ENCODE measurements at regions of chr2 and their contacts with region 1.

Region 1: DNA sequence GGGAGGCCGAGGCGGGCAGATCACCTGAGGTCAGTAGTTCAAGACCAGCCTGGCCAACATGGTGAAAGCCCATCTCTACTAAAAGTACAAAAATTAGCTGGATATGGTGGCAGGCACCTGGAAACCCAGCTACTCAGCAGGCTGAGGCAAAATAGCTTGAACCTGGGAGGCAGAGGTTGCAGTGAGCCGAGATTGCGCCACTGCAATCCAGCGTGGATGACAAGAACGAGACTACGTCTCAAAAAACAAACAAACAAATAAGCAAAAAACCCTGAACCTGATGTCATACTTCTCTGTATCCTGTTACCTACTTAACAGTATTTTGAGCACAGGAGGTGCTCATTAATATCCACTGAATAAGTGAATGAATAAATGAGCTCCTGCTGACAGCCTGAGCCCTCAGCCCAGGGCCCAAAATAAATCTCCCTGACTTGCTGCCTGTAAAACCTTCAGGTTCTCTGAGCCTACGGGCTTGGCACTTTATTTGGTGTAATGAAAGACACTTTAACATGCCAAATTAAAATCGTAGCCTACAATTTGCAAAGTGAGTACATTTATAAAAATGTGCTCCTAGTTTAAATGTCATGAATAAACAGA is 215.1 kb downstream of the ZNF385B start:
- DNase-seq: no peak
- H3K4me3 ChIP-seq: no peak overlapping the region
- H3K27ac ChIP-seq: no peak overlapping the region
- H3K4me1 ChIP-seq: no peaks in the 10 kb centered on the region
- H3K27me3 ChIP-seq: no peaks in the 10 kb centered on the region
- CTCF ChIP-seq: no peak

Region 2: DNA sequence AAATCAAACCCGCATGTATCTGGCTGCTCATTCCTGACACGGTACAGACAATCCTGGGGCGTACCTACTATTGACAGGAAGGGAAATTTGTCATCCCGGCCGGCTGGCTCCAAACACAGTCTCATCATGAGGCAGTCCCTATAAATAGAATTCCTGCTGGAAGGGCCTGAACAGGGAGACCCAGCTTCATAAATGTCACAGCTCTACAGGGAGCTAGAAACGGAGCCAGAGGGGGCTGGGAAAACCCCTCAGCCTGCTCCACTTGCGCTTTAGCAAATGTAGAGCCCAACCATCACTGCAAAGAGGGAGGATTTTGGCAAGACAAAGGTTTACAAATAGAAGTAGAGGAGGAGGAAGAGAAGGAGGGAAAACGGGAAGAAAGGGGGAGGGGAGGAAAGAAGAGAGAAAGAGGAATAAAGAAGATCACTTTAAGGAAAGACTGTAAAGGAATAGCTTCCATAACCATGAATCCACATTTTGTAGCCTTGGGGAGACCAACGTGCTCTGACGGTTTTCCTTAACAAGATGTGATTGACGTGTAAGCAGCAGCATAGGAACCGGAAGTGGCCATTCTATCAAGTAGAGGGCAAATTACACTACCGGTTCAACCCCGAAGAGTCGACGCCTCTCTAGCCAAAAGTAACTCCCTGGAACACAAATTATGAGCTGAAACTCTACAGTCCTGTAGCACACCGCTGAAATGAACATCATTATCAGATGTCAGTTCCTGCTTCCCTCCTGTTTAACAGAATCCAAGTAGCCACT is 782.2 kb before region 1 on chr2:
- CTCF ChIA-PET with region 1: no interaction called
- POLR2A ChIA-PET with region 1: interaction called, 10 read pairs
- intact Hi-C with region 1: no loop called
- DNase-seq: no peak
- H3K4me3 ChIP-seq: no peak overlapping the region
- H3K27ac ChIP-seq: no peak overlapping the region
- H3K4me1 ChIP-seq: no peaks in the 10 kb centered on the region
- H3K27me3 ChIP-seq: no peaks in the 10 kb centered on the region
- CTCF ChIP-seq: no peak